CD4-positive, alpha-beta memory T cell (primary cell): ENCODE measurements at regions of chr10 and their contacts with region 1.

Region 1: DNA sequence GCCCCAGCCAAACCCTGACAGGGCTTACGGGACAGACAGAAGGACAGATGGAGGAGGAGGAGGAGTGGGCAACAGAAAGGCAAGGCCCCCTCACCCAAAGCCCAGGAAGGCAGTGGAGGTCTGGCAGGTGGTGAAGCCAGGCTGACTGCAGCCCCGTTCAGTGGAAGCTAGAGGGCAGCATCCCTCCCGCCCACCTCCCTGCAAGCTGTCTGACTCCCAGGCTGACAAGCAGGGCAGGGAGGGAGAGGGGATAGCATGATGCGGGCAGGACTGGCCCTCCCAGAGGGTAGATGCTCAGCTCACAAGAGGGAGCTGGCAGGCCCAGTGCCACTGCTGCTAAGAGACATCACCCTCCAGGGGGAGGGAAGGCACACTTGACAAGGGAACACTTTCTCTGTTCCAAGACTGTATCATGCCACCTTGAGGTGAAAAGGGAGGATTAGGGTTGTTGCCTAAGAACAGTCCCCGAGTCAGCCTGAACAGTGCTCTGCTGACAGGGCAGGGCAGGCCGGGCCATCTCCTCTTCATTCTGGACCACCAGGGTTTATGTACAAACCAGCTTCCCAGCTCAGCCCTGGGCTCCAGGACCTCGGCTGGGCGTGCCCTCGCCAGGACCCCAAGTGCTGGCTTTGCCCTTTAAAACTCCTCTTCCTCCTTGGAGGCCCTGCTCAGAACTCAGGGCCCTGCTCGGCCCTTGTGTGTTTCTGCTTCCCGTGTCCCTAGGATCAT is 61.8 kb downstream of the RASGEF1A start:
- DNase-seq: peak in 4 of 5 donors; percentile 29 to 52 (median 47)
- H3K4me3 ChIP-seq: no peak overlapping the region
- H3K4me3 Mint-ChIP-seq: no peak overlapping the region
- H3K27ac ChIP-seq: no peak overlapping the region
- H3K27ac Mint-ChIP-seq: peak overlapping the region in 2 of 7 donors; percentile 53 to 66
- H3K4me1 ChIP-seq: peaks cover 8% of the 10 kb centered on the region
- H3K4me1 Mint-ChIP-seq: peaks cover 0 to 10% (median 2%) of the 10 kb centered on the region in 4 donors
- H3K27me3 ChIP-seq: no peaks in the 10 kb centered on the region
- H3K27me3 Mint-ChIP-seq: no peaks in the 10 kb centered on the region

Region 2: DNA sequence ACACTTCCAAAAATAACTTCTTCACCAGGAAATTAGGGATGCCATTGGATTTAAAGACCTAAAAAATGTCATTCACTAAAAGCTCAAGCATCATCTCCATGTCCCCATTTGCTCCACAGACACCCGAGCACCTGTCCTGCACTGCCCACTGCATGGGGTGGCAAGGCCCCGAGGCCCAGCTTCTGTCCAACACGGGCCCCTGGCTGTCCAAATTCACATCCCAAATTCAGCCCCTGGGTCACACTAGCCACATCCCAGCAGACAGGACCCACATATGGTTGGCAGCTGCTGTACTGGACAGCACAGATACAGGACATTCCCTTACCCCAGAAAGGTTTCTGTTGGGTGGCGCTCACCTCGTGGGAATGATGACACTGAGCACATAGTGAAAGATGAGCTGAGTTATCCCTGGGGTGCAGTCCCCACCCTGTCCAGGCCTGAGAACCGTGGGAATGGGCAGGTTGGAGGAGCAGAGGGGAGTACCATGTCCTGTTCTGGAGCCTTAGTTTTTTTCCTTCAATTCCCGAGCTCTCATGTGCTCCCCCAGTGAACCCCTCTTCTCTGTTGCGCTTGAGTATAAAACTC is 11.5 kb before region 1 on chr10:
- CTCF ChIA-PET with region 1: interaction called, 19 read pairs
- POLR2A ChIA-PET with region 1: interaction called, 3 read pairs
- intact Hi-C with region 1: no loop called
- DNase-seq: no peak
- H3K4me3 ChIP-seq: no peak overlapping the region
- H3K4me3 Mint-ChIP-seq: no peak overlapping the region
- H3K27ac ChIP-seq: no peak overlapping the region
- H3K27ac Mint-ChIP-seq: peak overlapping the region in 2 of 7 donors; percentile 63 to 81
- H3K4me1 ChIP-seq: no peaks in the 10 kb centered on the region
- H3K4me1 Mint-ChIP-seq: peaks cover 0 to 12% (median under 1%) of the 10 kb centered on the region in 4 donors
- H3K27me3 ChIP-seq: no peaks in the 10 kb centered on the region
- H3K27me3 Mint-ChIP-seq: no peaks in the 10 kb centered on the region

Region 3: DNA sequence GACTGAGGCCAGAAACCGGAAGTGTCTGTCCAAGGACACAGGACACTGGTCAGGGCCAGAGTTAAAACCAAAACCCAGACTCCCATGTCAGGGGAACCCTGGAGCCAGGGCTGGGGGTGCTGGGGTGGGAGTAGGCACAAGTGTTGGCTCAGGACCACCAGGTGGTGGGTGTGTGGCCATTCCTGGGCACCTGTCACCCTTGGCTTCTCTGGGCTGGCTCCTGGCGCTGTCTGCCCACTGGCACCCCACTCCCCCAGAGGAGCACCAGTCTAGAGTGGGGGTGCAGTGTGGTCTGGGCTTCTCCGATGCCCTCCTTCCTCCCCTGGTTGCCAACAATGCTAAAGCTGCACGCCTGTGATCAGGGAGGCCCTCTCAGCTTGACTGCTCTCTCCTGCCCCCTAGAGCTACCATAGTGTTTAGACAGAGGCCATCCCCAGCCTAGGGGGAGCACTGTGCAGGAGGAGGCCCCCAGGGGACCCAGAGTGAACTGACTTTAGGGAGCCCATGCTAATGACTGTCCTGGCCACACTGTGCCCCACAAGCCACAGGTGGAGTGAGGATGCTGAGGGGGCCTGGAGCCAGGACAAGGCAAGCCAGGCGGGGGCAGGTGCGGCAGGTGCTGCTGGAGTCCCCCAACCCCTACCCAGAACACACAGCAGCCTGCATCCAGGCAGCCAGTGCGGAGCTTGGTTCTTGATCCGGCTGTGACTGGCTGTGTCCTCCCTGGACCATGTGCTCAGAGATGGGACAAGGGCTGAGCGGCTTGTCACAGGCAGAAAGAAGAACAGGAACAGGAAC is 50.7 kb after region 1 on chr10:
- CTCF ChIA-PET with region 1: interaction called, 10 read pairs
- POLR2A ChIA-PET with region 1: no interaction called
- intact Hi-C with region 1: loop called (anchors 10 kb)
- DNase-seq: peak; percentile 26 to 44 (median 34)
- H3K4me3 ChIP-seq: no peak overlapping the region
- H3K4me3 Mint-ChIP-seq: no peak overlapping the region
- H3K27ac ChIP-seq: no peak overlapping the region
- H3K27ac Mint-ChIP-seq: peak overlapping the region in 4 of 7 donors; percentile 33 to 75 (median 47)
- H3K4me1 ChIP-seq: peaks cover 12% of the 10 kb centered on the region
- H3K4me1 Mint-ChIP-seq: peaks cover 6 to 36% (median 15%) of the 10 kb centered on the region in 4 donors
- H3K27me3 ChIP-seq: no peaks in the 10 kb centered on the region
- H3K27me3 Mint-ChIP-seq: no peaks in the 10 kb centered on the region